ENCODE measurements at regions of chr2 and their contacts with region 1.

Region 1: DNA sequence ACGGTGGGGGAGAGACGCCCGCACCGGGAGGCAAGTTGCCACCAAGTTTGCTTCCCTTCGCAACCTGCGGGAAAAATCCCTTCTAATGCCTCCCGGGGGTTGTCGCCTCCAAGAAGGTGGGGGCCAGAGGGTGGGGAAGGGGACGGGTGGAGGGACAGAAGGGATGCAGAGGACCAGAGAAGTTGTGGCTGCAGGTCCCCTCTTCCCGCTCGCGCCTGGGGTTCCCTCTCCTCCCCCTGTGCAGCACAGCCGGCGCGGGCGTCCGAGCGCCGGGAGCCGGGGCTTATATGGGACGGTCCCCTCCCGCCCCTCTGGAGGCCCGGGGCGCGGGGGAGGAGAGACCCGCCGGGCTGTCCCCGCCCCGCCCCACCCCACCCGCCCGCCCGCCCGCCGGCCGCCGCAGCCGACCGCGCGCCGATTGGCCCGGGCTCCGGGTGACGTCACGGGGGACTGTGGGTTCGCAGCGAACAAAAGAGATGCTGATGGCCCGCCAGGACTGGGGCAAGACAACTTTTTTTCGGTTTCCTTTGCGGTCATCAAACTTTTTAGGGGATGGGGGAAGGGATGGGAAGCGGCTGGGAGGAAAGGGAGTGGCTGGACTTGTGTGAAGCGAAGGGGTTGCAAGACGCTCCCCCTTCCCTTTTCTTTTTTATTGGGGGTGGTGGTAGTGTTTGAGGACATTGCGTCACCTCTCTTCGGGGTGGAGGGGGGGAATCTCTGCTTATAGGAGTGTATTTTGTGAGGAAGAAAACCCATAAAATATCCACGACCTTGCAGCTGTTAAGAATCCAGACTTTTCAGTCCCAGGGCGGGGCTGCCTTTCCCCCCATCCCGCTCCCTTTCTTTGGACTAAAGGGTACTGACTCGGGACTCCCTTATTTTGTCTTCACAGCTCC is at the start of gene FN1:
- DNase-seq: peak; percentile 98
- H3K4me3 ChIP-seq: peak within 1 kb of the TSS; percentile 74 to 95 (median 88)
- H3K27ac ChIP-seq: peak within 1 kb of the TSS; percentile 87 to 97 (median 96)
- H3K4me1 ChIP-seq: peaks cover 9 to 48% (median 39%) of the 10 kb centered on the region in 4 donors
- H3K27me3 ChIP-seq: no peaks in the 10 kb centered on the region
- CTCF ChIP-seq: no peak
- EP300 ChIP-seq: no peak
- POLR2A ChIP-seq: peak; percentile 71
- total RNA-seq, gene FN1: 2,256 to 4,873 (median 2,950) TPM

Region 2: GRCh38 chr2:215517391-215517790 is 81.3 kb after region 1 on chr2:
- intact Hi-C with region 1: no loop called
- DNase-seq: no peak
- H3K4me3 ChIP-seq: no peak overlapping the region
- H3K27ac ChIP-seq: no peak overlapping the region
- H3K4me1 ChIP-seq: peaks cover 0 to 8% (median 0%) of the 10 kb centered on the region in 4 donors
- H3K27me3 ChIP-seq: no peaks in the 10 kb centered on the region
- CTCF ChIP-seq: no peak
- EP300 ChIP-seq: no peak
- POLR2A ChIP-seq: no peak

Region 3: GRCh38 chr2:215528555-215528954 is 92.5 kb after region 1 on chr2:
- intact Hi-C with region 1: no loop called
- DNase-seq: no peak
- H3K4me3 ChIP-seq: no peak overlapping the region
- H3K27ac ChIP-seq: no peak overlapping the region
- H3K4me1 ChIP-seq: peaks cover 0 to 28% (median 17%) of the 10 kb centered on the region in 4 donors
- H3K27me3 ChIP-seq: no peaks in the 10 kb centered on the region
- CTCF ChIP-seq: no peak
- EP300 ChIP-seq: no peak
- POLR2A ChIP-seq: no peak

Region 4: GRCh38 chr2:215624423-215624829 is 188.4 kb after region 1 on chr2:
- intact Hi-C with region 1: loop called (anchors 5 kb)
- DNase-seq: no peak
- H3K4me3 ChIP-seq: no peak overlapping the region
- H3K27ac ChIP-seq: peak overlapping the region; percentile 78 to 86 (median 86)
- H3K4me1 ChIP-seq: peaks cover 0 to 65% (median 50%) of the 10 kb centered on the region in 4 donors
- H3K27me3 ChIP-seq: no peaks in the 10 kb centered on the region
- CTCF ChIP-seq: peak in 1 of 3 experiments; percentile 3
- EP300 ChIP-seq: peak; percentile 95
- POLR2A ChIP-seq: no peak

Region 5: DNA sequence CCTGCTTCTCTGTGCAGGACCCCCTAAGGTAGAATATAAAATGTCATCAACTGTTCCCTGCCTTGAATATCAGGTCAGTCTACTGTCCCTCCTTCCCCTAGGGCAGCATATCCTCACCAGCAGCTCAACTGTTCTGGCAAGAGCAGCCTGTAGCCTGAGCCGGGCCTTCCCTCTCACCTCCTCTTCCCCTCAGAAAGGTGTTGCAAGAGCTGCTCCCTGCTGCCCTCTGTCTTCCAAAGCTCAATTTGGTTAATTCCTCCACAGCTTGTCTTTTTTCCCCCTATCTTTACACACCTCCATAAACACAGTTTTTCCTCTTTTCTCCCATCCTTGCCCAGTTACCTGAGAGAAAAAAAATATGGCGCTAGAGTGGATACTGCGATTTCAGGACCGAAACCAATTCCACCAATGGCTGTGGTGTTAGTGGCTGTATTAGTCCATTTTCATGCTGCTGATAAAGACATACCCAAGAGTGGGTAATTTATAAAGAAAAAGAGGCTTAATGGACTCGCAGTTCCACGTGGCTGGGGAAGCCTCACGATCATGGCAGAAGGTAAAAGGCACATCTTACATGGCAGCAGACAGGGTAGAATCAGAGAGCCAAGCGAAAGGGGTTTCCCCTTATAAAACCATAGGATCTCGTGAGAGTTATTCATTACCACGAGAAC is 392.6 kb after region 1 on chr2:
- intact Hi-C with region 1: loop called (anchors 10 kb)
- DNase-seq: peak; percentile 91
- H3K4me3 ChIP-seq: no peak overlapping the region
- H3K27ac ChIP-seq: no peak overlapping the region
- H3K4me1 ChIP-seq: peaks cover 0 to 53% (median 47%) of the 10 kb centered on the region in 4 donors
- H3K27me3 ChIP-seq: no peaks in the 10 kb centered on the region
- CTCF ChIP-seq: peak; percentile 44 to 56 (median 47)
- EP300 ChIP-seq: no peak
- POLR2A ChIP-seq: no peak